AG04450 (cell line): ENCODE measurements at regions of chr3 and their contacts with region 1.

Region 1: DNA sequence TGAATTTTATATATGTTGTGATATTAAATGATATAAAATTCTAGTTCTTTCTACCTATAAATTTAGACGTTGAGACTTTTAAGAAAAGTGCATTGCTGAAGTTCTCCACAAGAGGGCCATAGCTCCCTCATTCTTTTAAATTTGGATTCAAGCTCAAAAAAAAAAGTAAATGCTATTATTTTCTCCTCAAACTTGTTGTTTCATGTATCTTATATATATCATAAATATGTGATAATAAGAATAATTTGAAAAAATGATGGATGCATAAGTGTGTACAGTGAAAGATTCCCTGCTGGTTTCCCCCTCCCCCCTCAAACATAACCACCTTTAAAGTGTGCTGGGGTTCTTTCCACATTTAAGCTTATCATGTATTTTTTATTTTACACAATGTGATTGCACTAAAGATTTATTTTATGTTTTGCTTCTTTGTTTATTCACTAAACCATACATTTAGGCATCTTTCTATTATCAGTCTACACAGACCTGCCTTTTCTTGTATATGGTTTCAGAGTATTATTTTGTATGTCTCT is 769.4 kb upstream of the GOLIM4 start:
- DNase-seq: no peak
- H3K4me3 ChIP-seq: no peak overlapping the region
- H3K27ac ChIP-seq: no peak overlapping the region
- H3K27me3 ChIP-seq: no peaks in the 10 kb centered on the region
- CTCF ChIP-seq: peak; percentile 81

Region 2: GRCh38 chr3:168624892-168625448 is 240.1 kb before region 1 on chr3:
- CTCF ChIA-PET with region 1: no interaction called
- POLR2A ChIA-PET with region 1: no interaction called
- DNase-seq: no peak
- H3K4me3 ChIP-seq: no peak overlapping the region
- H3K27ac ChIP-seq: no peak overlapping the region
- H3K27me3 ChIP-seq: no peaks in the 10 kb centered on the region
- CTCF ChIP-seq: no peak

Region 3: GRCh38 chr3:168878655-168879054 is 13.6 kb after region 1 on chr3:
- CTCF ChIA-PET with region 1: interaction called, 54 read pairs
- POLR2A ChIA-PET with region 1: interaction called, 4 read pairs
- DNase-seq: no peak
- H3K4me3 ChIP-seq: no peak overlapping the region
- H3K27ac ChIP-seq: no peak overlapping the region
- H3K27me3 ChIP-seq: no peaks in the 10 kb centered on the region
- CTCF ChIP-seq: no peak

Region 4: DNA sequence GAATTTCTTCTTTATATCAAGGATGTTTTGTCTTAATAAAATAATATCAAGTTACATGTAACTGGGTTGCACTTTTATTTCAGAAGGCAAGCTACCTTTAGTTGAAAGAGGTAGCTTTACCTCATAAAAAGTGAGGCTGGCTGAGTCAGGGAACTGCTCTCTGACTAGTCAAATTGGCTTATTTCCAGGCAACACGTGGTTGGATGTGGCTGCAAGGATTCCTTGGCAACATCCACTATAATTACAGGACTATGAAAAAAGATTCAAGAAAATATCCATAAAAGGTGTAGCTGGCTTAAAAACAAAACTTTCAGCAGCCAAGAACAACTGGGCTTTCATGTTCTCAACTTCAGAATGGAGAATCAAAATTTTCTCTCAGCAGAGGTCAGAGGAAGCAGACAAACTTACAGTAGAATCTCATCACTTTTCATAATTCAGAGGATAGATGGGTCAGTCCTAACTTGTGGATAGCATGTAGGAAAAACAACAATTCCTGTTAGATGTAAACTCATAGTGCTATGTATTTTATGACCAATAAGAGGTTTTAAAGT is 19.3 kb after region 1 on chr3:
- CTCF ChIA-PET with region 1: interaction called, 26 read pairs
- POLR2A ChIA-PET with region 1: interaction called, 4 read pairs
- DNase-seq: peak; percentile 48
- H3K4me3 ChIP-seq: no peak overlapping the region
- H3K27ac ChIP-seq: no peak overlapping the region
- H3K27me3 ChIP-seq: no peaks in the 10 kb centered on the region
- CTCF ChIP-seq: no peak

Region 5: DNA sequence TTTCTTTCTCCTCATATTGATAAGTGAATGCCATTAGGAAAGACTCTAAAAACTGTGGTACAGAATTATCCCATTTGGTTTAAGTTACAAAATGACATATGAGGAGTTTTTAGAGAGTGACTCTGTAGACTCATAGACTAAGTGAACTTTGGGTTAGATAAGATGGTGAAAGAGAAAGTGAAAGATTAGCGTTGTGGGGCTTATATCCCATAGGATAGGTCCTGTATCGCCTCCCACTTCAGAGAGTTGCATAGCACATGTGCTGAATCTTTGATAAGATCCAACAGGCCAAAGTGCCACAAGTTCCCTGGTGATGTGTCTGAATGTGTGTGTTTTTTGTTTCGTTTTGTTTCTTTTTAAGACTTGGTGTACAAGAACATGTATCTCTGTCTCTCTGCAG is 131.5 kb after region 1 on chr3:
- CTCF ChIA-PET with region 1: no interaction called
- POLR2A ChIA-PET with region 1: no interaction called
- DNase-seq: no peak
- H3K4me3 ChIP-seq: no peak overlapping the region
- H3K27ac ChIP-seq: no peak overlapping the region
- H3K27me3 ChIP-seq: no peaks in the 10 kb centered on the region
- CTCF ChIP-seq: no peak

Region 6: DNA sequence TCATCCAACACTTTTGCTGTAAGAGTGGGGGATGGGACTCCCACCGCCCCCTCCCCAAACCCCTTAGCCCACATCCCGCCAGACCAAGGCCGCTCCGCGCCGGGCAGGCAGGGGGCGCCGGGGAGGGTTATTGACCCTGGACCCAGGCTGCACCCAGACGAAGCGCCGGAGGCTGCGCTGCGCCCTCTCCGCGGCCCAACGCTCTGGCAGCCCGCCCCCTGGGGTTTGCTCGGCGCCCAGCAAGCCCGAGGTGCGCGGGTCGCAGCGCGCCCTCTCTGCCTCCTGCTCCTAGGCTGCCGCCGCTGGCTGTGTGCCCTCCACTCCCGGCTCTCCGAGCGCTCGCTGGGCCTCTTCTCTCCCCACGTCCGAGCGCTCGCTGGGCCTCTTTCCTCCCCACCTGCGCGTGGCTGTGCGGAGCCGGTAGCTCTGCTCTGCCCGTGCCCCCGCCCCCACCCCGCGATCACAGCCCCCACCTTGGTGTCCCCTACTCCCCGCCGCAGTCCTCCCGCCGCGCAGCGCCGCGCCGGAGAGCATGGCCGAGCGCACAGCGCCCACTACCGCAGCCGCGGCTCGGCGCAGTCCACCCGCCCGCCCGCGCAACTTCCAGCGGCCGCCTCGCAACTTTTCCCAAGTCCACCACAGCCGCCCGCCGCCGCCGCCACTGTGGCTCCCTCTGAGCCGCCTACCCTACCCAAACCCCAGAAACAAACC is 797.2 kb after region 1 on chr3:
- CTCF ChIA-PET with region 1: interaction called, 56 read pairs
- POLR2A ChIA-PET with region 1: no interaction called
- DNase-seq: no peak
- H3K4me3 ChIP-seq: peak overlapping the region; percentile 69
- H3K27ac ChIP-seq: no peak overlapping the region
- H3K27me3 ChIP-seq: peaks cover 56% of the 10 kb centered on the region
- CTCF ChIP-seq: peak; percentile 44

Region 7: GRCh38 chr3:169668957-169669681 is 804.0 kb after region 1 on chr3:
- CTCF ChIA-PET with region 1: interaction called, 56 read pairs
- POLR2A ChIA-PET with region 1: no interaction called
- DNase-seq: no peak
- H3K4me3 ChIP-seq: peak overlapping the region; percentile 55
- H3K27ac ChIP-seq: no peak overlapping the region
- H3K27me3 ChIP-seq: peaks cover 58% of the 10 kb centered on the region
- CTCF ChIP-seq: peak; percentile 74

Region 8: GRCh38 chr3:169744366-169745054 is 879.4 kb after region 1 on chr3:
- CTCF ChIA-PET with region 1: interaction called, 39 read pairs
- POLR2A ChIA-PET with region 1: no interaction called
- DNase-seq: no peak
- H3K4me3 ChIP-seq: no peak overlapping the region
- H3K27ac ChIP-seq: no peak overlapping the region
- H3K27me3 ChIP-seq: peaks cover 6% of the 10 kb centered on the region
- CTCF ChIP-seq: peak; percentile 47

Region 9: GRCh38 chr3:169764452-169765274 is 899.6 kb after region 1 on chr3 and contains the start of gene TERC:
- CTCF ChIA-PET with region 1: interaction called, 13 read pairs
- POLR2A ChIA-PET with region 1: no interaction called
- DNase-seq: peak; percentile 69
- H3K4me3 ChIP-seq: peak within 1 kb of the TSS; percentile 83
- H3K27ac ChIP-seq: peak within 1 kb of the TSS; percentile 88
- H3K27me3 ChIP-seq: no peaks in the 10 kb centered on the region
- CTCF ChIP-seq: no peak
- polyA plus RNA-seq, gene TERC: not detected in 2 replicates